ENCODE measurements at regions of chr10 and their contacts with region 1.

Region 1: DNA sequence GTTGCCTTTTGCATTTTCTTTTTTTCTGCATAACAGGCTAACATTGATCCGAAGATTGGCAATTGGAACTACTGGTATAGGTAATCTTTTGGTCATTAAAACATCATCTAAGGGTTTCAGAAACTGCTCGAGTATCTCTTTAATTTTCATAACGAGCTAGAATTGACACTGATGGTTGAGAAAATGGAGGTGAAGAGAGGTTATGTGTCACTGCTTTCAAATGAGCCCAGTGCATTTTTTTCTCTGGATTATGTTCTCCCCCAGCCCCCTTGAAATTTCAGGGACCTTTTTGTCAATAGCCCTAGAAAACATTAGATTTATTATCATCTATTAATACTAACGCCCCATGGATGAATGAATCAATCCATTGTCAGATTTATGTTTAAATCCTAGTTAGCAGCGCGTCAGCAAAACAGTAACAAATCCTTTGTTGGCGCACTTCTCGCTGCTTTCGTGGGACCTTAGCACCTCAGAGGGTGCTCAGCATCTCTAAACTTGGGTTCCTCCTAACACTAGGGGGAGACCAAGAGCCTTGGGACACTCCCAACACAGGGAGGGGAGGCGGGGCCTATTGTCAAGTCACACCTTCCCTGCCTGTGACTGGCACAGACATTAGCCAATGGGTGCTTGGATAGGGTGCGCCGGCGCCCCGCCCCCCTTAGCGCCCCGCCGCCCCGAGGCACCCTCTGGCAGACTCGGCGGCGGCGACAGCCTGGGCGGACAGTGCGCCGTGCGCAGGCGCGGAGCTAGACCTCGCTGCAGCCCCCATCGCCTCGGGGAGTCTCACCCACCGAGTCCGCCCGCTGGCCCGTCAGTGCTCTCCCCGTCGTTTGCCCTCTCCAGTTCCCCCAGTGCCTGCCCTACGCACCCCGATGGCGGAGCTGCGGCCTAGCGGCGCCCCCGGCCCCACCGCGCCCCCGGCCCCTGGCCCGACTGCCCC is at the start of gene SUFU:
- DNase-seq: peak; percentile 97
- H3K4me3 Mint-ChIP-seq: no peak within 1 kb of the TSS
- H3K27ac Mint-ChIP-seq: peak within 1 kb of the TSS; percentile 84
- H3K4me1 Mint-ChIP-seq: peaks cover 25% of the 10 kb centered on the region
- H3K27me3 Mint-ChIP-seq: no peaks in the 10 kb centered on the region
- total RNA-seq, gene SUFU: 9.3 and 11.6 TPM in 2 replicates

Region 2: DNA sequence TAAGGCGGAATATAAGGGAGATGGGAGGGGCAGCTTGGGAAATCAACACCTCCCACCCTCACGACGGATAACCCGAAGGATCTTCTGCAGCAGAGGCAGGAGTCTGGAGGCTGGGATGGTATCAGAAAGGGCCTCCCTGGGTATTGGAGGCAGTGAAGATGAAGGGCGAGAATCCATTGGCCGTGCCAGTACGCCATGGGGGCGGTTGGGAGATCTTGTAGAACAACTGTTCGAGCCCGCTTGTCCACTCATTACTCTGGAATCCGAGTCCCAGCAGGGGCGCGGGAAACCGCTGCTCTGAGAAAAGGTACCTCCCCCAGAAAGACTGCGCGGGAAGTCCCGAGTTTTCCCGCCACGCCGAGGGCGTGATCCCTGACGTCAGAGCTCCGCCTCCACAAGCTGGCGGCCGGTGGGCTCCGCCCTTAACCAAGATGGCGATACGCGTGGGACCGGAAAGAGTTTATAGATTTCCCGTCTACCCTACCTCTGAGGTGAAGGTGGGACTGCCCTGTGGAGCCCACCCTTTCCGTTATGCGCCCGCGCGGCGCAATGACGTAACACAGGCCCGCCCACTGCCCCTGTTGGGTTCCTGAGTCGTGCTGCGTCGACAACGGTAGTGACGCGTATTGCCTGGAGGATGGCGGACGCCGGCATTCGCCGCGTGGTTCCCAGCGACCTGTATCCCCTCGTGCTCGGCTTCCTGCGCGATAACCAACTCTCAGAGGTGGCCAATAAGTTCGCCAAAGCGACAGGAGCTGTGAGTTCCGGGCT is 351.6 kb before region 1 on chr10 and contains the start of gene NOLC1:
- intact Hi-C with region 1: loop called (anchors 1 kb)
- DNase-seq: peak; percentile 100
- H3K4me3 Mint-ChIP-seq: peak within 1 kb of the TSS; percentile 98
- H3K27ac Mint-ChIP-seq: peak within 1 kb of the TSS; percentile 98
- H3K4me1 Mint-ChIP-seq: peaks cover 28% of the 10 kb centered on the region
- H3K27me3 Mint-ChIP-seq: no peaks in the 10 kb centered on the region
- total RNA-seq, gene NOLC1: 260 and 271 TPM in 2 replicates

Region 3: DNA sequence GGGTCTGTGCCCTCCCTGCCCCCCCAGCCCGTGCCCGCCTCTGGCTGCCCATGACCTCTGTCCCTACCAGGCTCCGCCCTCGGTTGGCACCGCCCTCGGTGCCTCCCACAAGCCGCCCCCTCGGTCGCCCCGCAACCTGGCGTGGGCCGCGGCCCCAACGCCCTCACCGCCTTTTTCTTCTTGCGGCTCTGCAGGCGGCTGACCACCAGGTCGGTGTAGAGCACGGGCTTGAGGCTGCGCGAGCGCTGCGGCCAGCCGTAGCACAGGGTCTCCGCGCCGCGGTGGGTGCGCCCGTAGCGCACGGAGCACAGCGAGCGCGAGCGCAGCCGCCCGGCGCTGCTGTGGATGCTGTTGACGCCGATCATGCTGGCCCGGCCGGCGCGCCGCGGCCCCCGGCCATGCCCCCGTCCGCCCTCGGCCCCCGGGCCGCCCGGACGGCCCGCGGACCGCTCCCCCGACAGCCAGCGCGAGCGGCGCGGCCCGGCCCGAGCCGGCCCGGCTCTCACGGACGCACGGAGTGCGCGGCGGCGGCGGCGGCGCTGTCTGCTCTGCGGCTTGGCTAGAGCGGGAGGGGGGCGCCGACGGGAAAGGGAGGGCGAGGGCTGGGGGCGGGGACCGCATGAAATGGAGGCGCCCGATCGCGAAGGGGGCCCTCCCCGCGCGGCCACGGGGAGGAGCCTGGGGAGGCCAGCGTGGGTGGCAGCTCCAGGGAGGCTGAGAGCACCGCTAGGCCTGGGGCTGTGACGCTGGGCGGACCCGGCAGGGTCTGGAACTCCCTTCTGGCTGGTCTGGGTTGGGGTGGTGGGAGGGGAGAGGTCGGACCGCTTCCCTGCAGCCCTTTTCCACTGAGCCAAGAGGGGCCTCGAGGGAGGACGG is 94.6 kb before region 1 on chr10:
- intact Hi-C with region 1: loop called (anchors 1 kb)
- DNase-seq: peak; percentile 64
- H3K4me3 Mint-ChIP-seq: peak overlapping the region; percentile 87
- H3K27ac Mint-ChIP-seq: peak overlapping the region; percentile 81
- H3K4me1 Mint-ChIP-seq: peaks cover 54% of the 10 kb centered on the region
- H3K27me3 Mint-ChIP-seq: peaks cover 24% of the 10 kb centered on the region

Region 4: GRCh38 chr10:102479651-102480050 is 23.9 kb before region 1 on chr10:
- intact Hi-C with region 1: loop called (anchors 1 kb)
- DNase-seq: no peak
- H3K4me3 Mint-ChIP-seq: no peak overlapping the region
- H3K27ac Mint-ChIP-seq: no peak overlapping the region
- H3K4me1 Mint-ChIP-seq: peaks cover 7% of the 10 kb centered on the region
- H3K27me3 Mint-ChIP-seq: no peaks in the 10 kb centered on the region

Region 5: DNA sequence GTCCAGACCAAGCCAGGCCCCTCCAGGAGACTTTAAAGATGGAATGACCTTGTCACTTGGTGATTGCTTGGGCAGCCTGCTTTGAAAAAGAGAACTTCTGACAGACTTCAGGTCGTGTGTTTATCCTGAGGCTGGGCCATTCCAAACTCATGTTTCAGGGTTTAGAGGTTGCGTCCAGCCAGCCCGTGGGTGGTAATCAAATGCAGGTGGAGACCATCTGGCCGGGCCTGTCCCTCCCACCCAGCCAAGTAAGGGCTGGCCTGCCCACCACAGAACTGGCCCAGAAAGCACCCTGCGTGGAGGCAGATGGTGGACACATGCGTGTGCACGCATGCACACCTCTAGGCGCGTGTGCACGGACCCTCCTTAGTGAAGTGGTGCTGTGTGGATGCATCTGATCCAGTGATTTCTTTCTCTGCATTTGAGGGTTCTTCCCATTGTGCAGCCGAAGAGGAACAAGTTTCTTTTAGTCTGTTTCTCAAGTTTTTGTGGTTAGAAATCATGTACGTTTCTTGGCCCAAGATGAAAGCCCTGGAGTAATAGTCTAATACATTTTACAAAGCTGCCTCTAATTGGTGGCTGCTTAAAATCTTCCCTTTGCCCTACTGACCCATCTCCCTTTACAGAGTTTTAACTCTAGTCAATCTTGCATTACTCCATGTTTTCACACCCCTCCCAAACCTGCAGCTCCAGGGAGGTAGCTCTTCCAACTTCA is 43.2 kb after region 1 on chr10:
- intact Hi-C with region 1: no loop called
- DNase-seq: no peak
- H3K4me3 Mint-ChIP-seq: no peak overlapping the region
- H3K27ac Mint-ChIP-seq: no peak overlapping the region
- H3K4me1 Mint-ChIP-seq: peaks cover 7% of the 10 kb centered on the region
- H3K27me3 Mint-ChIP-seq: peaks cover 2% of the 10 kb centered on the region

Region 6: GRCh38 chr10:102660888-102661657 is 157.5 kb after region 1 on chr10:
- intact Hi-C with region 1: loop called (anchors 1 kb)
- DNase-seq: peak; percentile 65
- H3K4me3 Mint-ChIP-seq: peak overlapping the region; percentile 62
- H3K27ac Mint-ChIP-seq: peak overlapping the region; percentile 88
- H3K4me1 Mint-ChIP-seq: peaks cover 39% of the 10 kb centered on the region
- H3K27me3 Mint-ChIP-seq: peaks cover 2% of the 10 kb centered on the region

Region 7: GRCh38 chr10:102917962-102918816 is 414.6 kb after region 1 on chr10 and contains the start of gene CNNM2:
- intact Hi-C with region 1: loop called (anchors 1 kb)
- DNase-seq: peak; percentile 99
- H3K4me3 Mint-ChIP-seq: peak within 1 kb of the TSS; percentile 92
- H3K27ac Mint-ChIP-seq: peak within 1 kb of the TSS; percentile 91
- H3K4me1 Mint-ChIP-seq: peaks cover 60% of the 10 kb centered on the region
- H3K27me3 Mint-ChIP-seq: peaks cover 7% of the 10 kb centered on the region
- total RNA-seq, gene CNNM2: 5.5 and 6.6 TPM in 2 replicates

Measured in activated T-helper 1 cell treated with anti-CD3 and anti-CD28 coated beads, Interleukin-12 subunit alpha, Interleukin-12 subunit beta, Interleukin-2, Interleukin-4 antibody, amounts not matched to agents 30 ng/mL and 10 ng/mL and 1 ng/mL, durations not matched to agents 14 hours and 24 hours and 36 hours (primary cell).